ENCODE measurements at regions of chr20 and their contacts with region 1.

Region 1: DNA sequence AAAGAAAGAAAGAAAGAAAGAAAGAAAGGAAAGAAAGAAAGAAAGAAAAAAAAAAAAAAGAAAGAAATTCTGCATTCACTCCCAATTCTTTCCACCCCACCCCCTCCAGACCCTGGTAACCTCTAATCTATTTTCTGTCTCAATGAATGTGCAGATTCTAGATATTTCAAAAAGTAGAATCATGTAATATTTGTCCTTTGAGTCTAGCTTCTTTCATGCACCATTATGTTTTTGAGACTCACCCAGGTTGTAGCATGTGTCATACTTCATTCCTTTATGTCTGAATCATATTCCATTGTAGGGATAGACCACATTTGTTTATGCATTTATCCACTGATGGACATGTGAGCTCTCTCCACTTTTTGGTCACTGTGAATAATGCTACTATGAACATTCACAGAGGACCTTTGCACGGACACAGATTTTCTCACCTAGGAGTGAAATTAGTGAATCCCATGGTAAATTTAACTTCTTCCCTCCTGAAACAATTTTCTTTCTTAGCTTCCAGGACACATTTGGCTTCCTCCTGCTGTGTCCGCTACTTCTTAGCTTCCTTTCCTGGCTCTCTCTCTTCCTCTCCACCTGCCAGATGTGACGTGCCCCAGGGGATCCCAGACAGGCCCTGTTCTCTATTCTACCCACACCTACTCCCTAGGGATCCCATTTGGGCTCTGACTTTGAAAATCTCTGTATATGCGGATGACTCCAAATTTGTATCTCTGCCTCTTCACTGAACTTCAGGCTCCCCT is 24.1 kb upstream of the ARFGEF2 start:
- DNase-seq: no peak

Region 2: GRCh38 chr20:48797275-48797825 is 100.1 kb before region 1 on chr20:
- intact Hi-C with region 1: loop called (anchors 5 kb)
- DNase-seq: no peak

Region 3: GRCh38 chr20:48921151-48921898 is 23.9 kb after region 1 on chr20 and contains the start of gene ARFGEF2:
- intact Hi-C with region 1: no loop called
- DNase-seq: peak; percentile 97
- total RNA-seq, gene ARFGEF2: 37.0 TPM

Region 4: GRCh38 chr20:49024220-49024619 is 126.8 kb after region 1 on chr20:
- intact Hi-C with region 1: no loop called
- DNase-seq: no peak